ENCODE measurements at regions of chr2 and their contacts with region 1.

Region 1: GRCh38 chr2:191150600-191151330 is at the start of gene STAT4:
- DNase-seq: peak; percentile 78
- H3K4me3 Mint-ChIP-seq: peak within 1 kb of the TSS; percentile 95
- H3K27ac Mint-ChIP-seq: peak within 1 kb of the TSS; percentile 95
- H3K4me1 Mint-ChIP-seq: peaks cover 85% of the 10 kb centered on the region
- H3K27me3 Mint-ChIP-seq: no peaks in the 10 kb centered on the region
- total RNA-seq, gene STAT4: 57.4 and 62.1 TPM in 2 replicates

Region 2: DNA sequence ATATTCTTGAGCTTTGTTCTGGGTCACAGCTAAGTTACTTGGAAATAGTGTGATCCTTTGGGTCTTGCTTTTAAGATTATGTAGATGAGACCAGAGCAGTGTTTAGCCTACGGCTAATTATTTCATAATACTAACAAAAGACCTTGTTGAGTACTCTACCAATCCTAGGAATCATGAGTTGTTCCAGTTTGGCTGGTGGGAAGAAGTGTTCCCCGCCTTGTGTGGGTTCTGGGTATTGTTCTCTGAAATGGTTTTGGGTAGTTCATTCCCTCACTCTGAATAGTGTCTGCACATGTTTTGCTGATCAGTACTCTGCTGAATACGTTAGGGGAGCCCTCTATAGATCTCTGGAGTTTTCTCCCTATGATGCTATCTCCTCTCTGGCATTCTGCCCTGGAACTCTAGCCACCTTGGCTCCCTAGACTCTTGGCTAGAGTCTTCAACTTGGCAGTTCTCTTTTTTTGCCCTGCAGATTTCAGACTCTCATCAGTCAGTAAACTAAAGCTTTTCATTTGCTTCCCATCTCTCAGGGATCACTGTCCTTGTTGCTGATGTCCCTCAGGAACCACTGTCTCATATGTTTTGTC is 664.6 kb before region 1 on chr2:
- intact Hi-C with region 1: no loop called
- DNase-seq: no peak
- H3K4me3 Mint-ChIP-seq: no peak overlapping the region
- H3K27ac Mint-ChIP-seq: no peak overlapping the region
- H3K4me1 Mint-ChIP-seq: peaks cover 8% of the 10 kb centered on the region
- H3K27me3 Mint-ChIP-seq: no peaks in the 10 kb centered on the region

Region 3: GRCh38 chr2:190693533-190694232 is 457.1 kb before region 1 on chr2:
- intact Hi-C with region 1: no loop called
- DNase-seq: no peak
- H3K4me3 Mint-ChIP-seq: no peak overlapping the region
- H3K27ac Mint-ChIP-seq: no peak overlapping the region
- H3K4me1 Mint-ChIP-seq: peaks cover 30% of the 10 kb centered on the region
- H3K27me3 Mint-ChIP-seq: no peaks in the 10 kb centered on the region

Region 4: DNA sequence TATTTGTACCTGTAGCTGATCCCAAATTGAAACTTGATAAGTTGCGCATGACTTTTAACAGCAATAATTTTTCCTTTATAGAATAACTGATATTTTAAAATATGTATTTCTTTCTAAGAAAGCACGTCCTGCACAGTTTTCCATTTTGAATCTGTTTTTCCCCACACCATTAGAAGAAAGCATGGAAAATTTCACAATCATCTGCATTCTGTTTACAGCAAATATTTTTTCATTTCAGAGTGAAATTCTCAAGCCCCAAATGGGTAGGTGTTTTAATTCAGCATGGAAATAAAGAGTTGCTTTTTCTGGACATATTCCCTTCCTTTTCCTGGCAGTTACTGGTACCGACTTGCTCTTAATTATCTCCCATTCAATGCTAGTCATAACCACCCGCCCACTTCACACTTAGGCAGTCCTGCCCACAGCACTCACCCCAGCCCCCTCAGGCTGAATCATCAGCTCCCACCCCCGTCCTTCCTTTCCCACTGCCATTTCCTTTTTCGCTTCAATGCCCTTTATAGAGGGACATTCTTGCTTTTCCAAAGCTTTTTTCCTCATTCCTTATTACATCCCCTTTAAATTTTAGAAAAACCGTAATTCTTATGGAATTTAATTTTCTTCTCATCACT is 359.3 kb before region 1 on chr2:
- intact Hi-C with region 1: loop called (anchors 5 kb)
- DNase-seq: no peak
- H3K4me3 Mint-ChIP-seq: peak overlapping the region; percentile 19
- H3K27ac Mint-ChIP-seq: peak overlapping the region; percentile 74
- H3K4me1 Mint-ChIP-seq: peaks cover 76% of the 10 kb centered on the region
- H3K27me3 Mint-ChIP-seq: no peaks in the 10 kb centered on the region

Region 5: GRCh38 chr2:191051825-191052778 is 98.7 kb before region 1 on chr2:
- intact Hi-C with region 1: loop called (anchors 1 kb)
- DNase-seq: no peak
- H3K4me3 Mint-ChIP-seq: no peak overlapping the region
- H3K27ac Mint-ChIP-seq: no peak overlapping the region
- H3K4me1 Mint-ChIP-seq: peaks cover 25% of the 10 kb centered on the region
- H3K27me3 Mint-ChIP-seq: no peaks in the 10 kb centered on the region

Region 6: GRCh38 chr2:191059308-191059707 is 91.5 kb before region 1 on chr2:
- intact Hi-C with region 1: loop called (anchors 1 kb)
- DNase-seq: no peak
- H3K4me3 Mint-ChIP-seq: no peak overlapping the region
- H3K27ac Mint-ChIP-seq: peak overlapping the region; percentile 45
- H3K4me1 Mint-ChIP-seq: peaks cover 68% of the 10 kb centered on the region
- H3K27me3 Mint-ChIP-seq: no peaks in the 10 kb centered on the region

Region 7: GRCh38 chr2:191066197-191066918 is 84.4 kb before region 1 on chr2:
- intact Hi-C with region 1: loop called (anchors 1 kb)
- DNase-seq: no peak
- H3K4me3 Mint-ChIP-seq: peak overlapping the region; percentile 78
- H3K27ac Mint-ChIP-seq: peak overlapping the region; percentile 79
- H3K4me1 Mint-ChIP-seq: peaks cover 90% of the 10 kb centered on the region
- H3K27me3 Mint-ChIP-seq: no peaks in the 10 kb centered on the region

Region 8: GRCh38 chr2:191078165-191078867 is 72.4 kb before region 1 on chr2:
- intact Hi-C with region 1: loop called (anchors 1 kb)
- DNase-seq: no peak
- H3K4me3 Mint-ChIP-seq: peak overlapping the region; percentile 60
- H3K27ac Mint-ChIP-seq: peak overlapping the region; percentile 89
- H3K4me1 Mint-ChIP-seq: peaks cover 31% of the 10 kb centered on the region
- H3K27me3 Mint-ChIP-seq: no peaks in the 10 kb centered on the region

Region 9: DNA sequence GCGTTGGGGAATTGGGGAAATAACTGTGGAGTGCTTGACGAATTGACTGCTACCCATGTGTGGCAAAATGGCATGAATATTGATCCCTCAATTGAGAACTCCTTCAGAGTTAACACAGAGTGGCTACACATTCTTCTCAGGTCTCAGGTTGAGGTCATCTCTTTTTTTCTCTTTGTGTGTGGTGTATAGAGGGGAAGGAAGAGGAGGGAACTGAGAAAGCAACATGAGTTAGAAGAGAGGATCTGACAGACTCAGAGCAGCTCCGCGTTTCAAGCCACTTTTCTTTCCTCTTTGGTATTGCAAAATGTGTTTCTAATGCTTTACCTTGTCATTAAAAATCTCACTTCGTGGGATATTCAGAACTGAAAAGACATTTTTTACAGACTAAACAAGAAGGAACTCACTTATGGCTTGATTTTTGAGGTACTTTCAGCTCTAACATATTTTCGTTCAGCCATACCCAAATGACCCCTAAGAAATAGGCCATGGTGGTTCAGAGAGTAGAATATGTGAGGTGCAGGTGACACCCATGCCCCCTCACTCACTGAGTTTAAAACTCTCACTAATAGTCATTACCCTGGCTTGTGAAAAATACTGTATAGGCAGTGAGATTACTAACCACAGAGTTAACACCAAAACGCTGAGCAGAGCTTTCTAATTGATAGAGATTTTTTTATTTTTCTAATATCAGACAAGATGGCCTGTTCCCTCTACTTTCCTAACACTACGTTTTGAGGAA is 22.4 kb before region 1 on chr2:
- intact Hi-C with region 1: loop called (anchors 1 kb)
- DNase-seq: no peak
- H3K4me3 Mint-ChIP-seq: peak overlapping the region; percentile 12
- H3K27ac Mint-ChIP-seq: peak overlapping the region; percentile 50
- H3K4me1 Mint-ChIP-seq: peaks cover 57% of the 10 kb centered on the region
- H3K27me3 Mint-ChIP-seq: no peaks in the 10 kb centered on the region